ENCODE measurements at regions of chr5 and their contacts with region 1.

Region 1: DNA sequence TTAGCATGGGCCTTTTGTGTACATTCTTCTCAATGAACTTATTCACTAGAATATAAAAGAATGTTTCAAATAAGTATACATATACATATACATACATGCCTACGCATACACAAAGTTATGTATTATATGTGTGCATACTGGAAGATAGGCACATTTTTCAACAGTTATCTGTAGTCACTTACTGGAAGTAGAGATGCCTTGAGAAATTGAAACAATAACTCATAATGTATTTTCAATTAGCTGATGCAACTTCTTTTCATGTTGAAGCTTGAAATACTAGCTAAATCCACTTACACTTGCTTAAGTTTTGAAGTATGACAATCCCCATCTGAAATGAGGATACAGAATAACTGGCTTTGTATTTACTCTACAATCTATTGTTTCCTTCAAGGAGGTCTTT is 469.0 kb upstream of the PTGER4 start:
- DNase-seq: no peak
- H3K4me3 ChIP-seq: no peak overlapping the region
- CTCF ChIP-seq: no peak

Region 2: DNA sequence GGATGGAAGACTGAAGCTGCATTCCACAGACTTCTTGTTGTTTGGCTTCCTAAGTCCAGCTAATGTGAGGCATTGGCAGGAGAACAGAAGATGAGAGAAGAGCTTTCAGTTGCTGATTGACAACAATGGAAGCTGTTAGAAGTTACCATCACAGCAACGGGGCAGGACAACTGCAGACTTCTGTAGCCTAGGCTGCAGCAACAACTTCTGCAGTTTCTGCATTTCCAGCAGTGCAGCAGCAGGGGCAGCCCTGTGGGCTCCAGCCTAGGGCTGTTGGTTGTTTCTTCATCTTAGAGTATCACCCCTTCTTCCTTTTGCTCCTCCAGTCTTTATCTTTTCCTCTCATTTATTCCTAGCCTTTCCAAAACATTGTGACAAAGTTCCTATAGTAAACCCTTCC is 59.8 kb before region 1 on chr5:
- in situ Hi-C with region 1: loop called (anchors 5 kb)
- DNase-seq: no peak
- H3K4me3 ChIP-seq: no peak overlapping the region
- CTCF ChIP-seq: no peak